ENCODE measurements at regions of chr20 and their contacts with region 1.

Region 1: DNA sequence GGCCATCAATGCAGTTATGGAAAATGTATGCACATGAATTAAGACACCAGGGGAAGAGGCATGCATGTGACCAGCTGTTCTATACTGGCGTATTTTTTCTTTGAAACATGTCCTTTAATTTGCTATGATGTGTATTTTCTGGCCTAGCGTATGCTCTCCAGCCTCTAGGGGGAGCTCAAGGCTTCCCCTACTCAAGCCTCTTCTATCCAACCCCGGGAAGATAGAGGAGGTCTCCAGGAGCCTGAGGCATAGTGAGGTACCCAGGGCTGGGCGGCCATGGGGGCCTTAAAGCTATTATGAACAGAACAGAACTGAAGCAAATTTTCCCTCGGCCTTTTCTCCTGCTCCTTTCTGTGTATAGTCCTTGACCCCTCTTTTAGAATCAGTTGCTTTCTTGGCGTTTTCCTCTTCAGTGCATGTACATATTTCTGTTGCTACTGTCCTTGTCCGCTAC is 528.9 kb downstream of the MAFB start:
- DNase-seq: peak; percentile 75
- H3K4me3 ChIP-seq: no peak overlapping the region
- H3K27ac ChIP-seq: no peak overlapping the region
- H3K4me1 ChIP-seq: no peaks in the 10 kb centered on the region
- H3K27me3 ChIP-seq: no peaks in the 10 kb centered on the region
- CTCF ChIP-seq: peak; percentile 83 to 89
- POLR2A ChIP-seq: no peak

Region 2: DNA sequence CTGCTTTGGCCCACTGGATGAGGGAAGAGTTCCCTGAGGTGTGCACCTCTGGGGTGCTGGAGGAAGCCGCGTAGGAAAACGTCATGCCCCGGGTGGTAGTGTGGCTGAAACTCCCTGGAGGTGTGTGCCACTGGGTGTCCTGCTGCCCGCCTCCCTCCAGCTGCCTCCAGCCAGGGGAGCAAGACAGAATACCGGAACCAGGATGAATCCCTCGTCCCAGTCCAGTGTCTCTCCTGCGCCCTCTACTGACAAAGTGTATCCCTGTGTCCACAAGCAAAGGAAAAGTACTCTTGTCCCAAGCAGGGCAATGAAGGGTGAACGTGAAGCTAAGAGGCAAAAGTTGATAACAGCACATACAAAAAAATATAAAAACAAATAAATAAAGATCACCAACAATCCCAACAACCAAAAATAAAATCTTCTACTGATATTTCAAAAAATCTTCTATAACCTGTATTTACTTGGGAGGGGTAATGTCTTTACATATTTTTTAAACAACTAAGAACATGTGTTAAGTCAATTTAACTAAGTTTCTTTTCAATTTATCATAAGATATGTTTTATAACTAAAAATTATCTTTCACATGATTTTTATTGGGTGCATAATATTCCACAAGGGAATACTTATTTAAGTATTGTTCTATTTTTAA is 91.3 kb after region 1 on chr20:
- CTCF ChIA-PET with region 1: no interaction called
- POLR2A ChIA-PET with region 1: no interaction called
- dilution Hi-C with region 1: no loop called
- intact Hi-C with region 1: loop called (anchors 5 kb)
- DNase-seq: peak; percentile 17
- H3K4me3 ChIP-seq: no peak overlapping the region
- H3K27ac ChIP-seq: no peak overlapping the region
- H3K4me1 ChIP-seq: no peaks in the 10 kb centered on the region
- H3K27me3 ChIP-seq: no peaks in the 10 kb centered on the region
- CTCF ChIP-seq: peak in 1 of 2 donors; percentile 27
- POLR2A ChIP-seq: no peak

Region 3: GRCh38 chr20:40431112-40432010 is 271.2 kb after region 1 on chr20:
- CTCF ChIA-PET with region 1: interaction called, 3 read pairs
- POLR2A ChIA-PET with region 1: no interaction called
- dilution Hi-C with region 1: no loop called
- intact Hi-C with region 1: loop called (anchors 10 kb)
- DNase-seq: no peak
- H3K4me3 ChIP-seq: no peak overlapping the region
- H3K27ac ChIP-seq: no peak overlapping the region
- H3K4me1 ChIP-seq: no peaks in the 10 kb centered on the region
- H3K27me3 ChIP-seq: no peaks in the 10 kb centered on the region
- CTCF ChIP-seq: no peak
- POLR2A ChIP-seq: no peak

Region 4: GRCh38 chr20:40532103-40532502 is 372.0 kb after region 1 on chr20:
- CTCF ChIA-PET with region 1: interaction called, 7 read pairs
- POLR2A ChIA-PET with region 1: no interaction called
- dilution Hi-C with region 1: no loop called
- intact Hi-C with region 1: loop called (anchors 2 kb)
- DNase-seq: peak; percentile 11
- H3K4me3 ChIP-seq: no peak overlapping the region
- H3K27ac ChIP-seq: no peak overlapping the region
- H3K4me1 ChIP-seq: no peaks in the 10 kb centered on the region
- H3K27me3 ChIP-seq: no peaks in the 10 kb centered on the region
- CTCF ChIP-seq: peak in 1 of 2 donors; percentile 29
- POLR2A ChIP-seq: no peak

Region 5: GRCh38 chr20:41889126-41889870 is 1729.2 kb after region 1 on chr20:
- CTCF ChIA-PET with region 1: no interaction called
- POLR2A ChIA-PET with region 1: no interaction called
- dilution Hi-C with region 1: no loop called
- intact Hi-C with region 1: loop called (anchors 10 kb)
- DNase-seq: no peak
- H3K4me3 ChIP-seq: no peak overlapping the region
- H3K27ac ChIP-seq: no peak overlapping the region
- H3K4me1 ChIP-seq: no peaks in the 10 kb centered on the region
- H3K27me3 ChIP-seq: no peaks in the 10 kb centered on the region
- CTCF ChIP-seq: no peak
- POLR2A ChIP-seq: no peak

Measured in endothelial cell of umbilical vein (primary cell).